ENCODE measurements at regions of chr9 and their contacts with region 1.

Region 1: DNA sequence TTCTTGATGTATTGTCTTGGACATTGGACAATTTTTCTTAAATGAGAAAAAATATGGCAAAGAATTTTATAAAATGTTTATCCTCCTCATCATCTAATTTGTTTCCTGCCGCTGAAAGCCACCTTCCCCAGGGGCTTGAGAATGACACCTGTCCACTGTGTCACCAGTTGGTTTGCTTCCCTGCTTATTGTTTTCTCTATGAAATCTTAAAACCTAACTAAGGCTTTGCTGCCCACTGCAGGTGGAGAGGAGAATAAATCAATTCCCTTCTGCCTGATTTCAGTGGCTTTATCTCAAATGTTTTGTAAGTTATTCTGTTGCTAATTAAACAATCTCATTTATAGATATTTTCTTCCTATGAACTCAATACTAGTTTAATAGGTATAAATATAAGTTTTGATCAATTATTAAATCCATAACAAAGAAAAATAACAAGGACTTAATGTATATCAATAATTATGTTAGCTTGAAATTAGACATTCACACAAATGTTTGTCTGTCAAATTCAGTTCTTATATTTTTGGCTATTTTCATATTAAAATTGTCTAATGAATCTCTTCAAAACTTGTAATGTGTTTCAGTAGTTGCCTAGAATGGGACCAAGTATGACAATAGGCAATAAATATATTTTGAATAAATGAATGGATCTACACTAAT is 822.5 kb downstream of the PTPRD start:
- DNase-seq: peak; percentile 19
- CTCF ChIP-seq: peak; percentile 75

Region 2: GRCh38 chr9:9605681-9606080 is 184.7 kb before region 1 on chr9:
- CTCF ChIA-PET with region 1: interaction called, 59 read pairs
- POLR2A ChIA-PET with region 1: no interaction called
- DNase-seq: no peak
- CTCF ChIP-seq: no peak